Mammary epithelial cell (primary cell): ENCODE measurements at regions of chr11 and their contacts with region 1.

Region 1: DNA sequence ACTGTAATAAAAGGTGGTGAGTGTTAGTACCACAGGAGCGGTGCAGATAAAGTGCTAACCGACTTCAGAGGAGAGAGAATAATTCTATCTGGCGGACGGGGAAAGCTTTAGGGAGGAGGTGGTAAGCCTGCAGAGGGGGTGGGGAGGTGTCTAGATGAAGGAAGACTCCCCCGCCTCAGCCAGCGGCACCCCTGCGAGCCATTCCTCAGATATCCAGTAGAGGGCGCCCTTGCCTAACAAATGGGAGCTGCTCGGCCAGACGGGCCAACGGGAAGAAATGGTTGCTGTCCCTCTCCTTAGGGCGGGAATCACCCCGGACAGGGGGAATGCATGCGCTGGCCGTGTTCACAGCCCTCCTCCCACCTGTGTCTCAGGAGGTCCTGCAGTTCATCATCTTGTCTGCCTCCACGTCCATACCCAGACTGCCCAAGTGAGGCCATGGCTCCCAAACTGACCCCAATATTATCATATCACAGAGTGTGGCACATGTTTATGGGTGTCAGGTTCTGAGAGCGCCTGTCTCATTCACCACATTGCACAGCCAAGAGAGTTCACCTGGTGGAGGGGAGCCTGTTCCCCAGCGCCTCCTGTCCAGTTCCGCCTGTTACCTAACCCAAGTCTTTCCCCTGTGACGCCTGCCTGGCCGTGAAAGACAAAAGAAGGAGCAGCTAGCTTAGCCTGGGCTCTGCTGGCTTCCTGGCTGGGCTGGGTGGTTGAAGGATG is 85.5 kb downstream of the ST3GAL4 start:
- DNase-seq: peak; percentile 49
- H3K4me3 ChIP-seq: no peak overlapping the region
- H3K27ac ChIP-seq: no peak overlapping the region
- H3K4me1 ChIP-seq: no peaks in the 10 kb centered on the region
- H3K27me3 ChIP-seq: no peaks in the 10 kb centered on the region
- CTCF ChIP-seq: peak; percentile 87 to 93

Region 2: DNA sequence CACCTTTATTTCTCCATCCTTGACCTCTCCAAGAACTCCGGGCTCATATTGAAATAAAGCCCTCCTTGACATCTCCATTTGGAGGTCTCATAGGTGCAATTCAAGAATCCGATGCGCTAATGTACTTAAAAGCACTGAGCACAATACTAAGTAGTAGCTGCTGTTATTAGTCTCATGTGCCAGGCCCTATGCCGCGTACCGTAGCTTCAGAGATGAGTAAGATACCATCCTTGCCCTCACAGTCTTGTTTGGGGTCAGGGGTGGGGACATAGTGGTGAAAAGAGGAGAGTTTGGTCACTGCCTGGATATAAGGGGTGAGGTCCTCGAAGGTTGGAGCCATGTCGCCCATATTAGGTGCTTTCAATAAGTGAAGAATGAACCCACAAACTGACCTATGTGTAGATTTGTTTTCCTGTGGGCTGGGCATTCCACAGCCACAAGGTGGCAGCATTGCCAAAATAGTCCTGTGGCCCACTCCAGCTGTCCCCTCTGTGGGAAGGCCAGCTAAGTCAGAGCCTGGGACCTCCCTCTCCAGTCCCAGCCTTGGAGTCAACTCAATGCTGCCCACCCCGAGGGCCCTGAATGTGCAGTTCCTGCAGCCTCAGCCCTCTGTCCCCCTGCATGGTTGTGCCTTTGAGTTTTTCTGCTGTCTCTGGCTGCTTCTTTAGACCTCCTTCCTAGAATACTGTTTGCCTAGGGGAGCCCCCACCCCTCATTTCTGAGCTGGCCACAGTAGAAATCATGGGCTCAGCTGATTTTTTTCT is 130.5 kb before region 1 on chr11:
- CTCF ChIA-PET with region 1: no interaction called
- dilution Hi-C with region 1: no loop called
- in situ Hi-C with region 1: no loop called
- intact Hi-C with region 1: loop called (anchors 1 kb)
- DNase-seq: peak; percentile 50
- H3K4me3 ChIP-seq: no peak overlapping the region
- H3K27ac ChIP-seq: no peak overlapping the region
- H3K4me1 ChIP-seq: peaks cover 22% of the 10 kb centered on the region
- H3K27me3 ChIP-seq: no peaks in the 10 kb centered on the region
- CTCF ChIP-seq: peak; percentile 86 to 93

Region 3: GRCh38 chr11:126403658-126404057 is 37.3 kb before region 1 on chr11:
- CTCF ChIA-PET with region 1: no interaction called
- dilution Hi-C with region 1: no loop called
- in situ Hi-C with region 1: no loop called
- intact Hi-C with region 1: no loop called
- DNase-seq: no peak
- H3K4me3 ChIP-seq: no peak overlapping the region
- H3K27ac ChIP-seq: no peak overlapping the region
- H3K4me1 ChIP-seq: peaks cover 35% of the 10 kb centered on the region
- H3K27me3 ChIP-seq: no peaks in the 10 kb centered on the region
- CTCF ChIP-seq: no peak

Region 4: GRCh38 chr11:126480410-126481302 is 39.7 kb after region 1 on chr11:
- CTCF ChIA-PET with region 1: interaction called, 11 read pairs
- dilution Hi-C with region 1: no loop called
- in situ Hi-C with region 1: no loop called
- intact Hi-C with region 1: loop called (anchors 1 kb)
- DNase-seq: peak; percentile 70
- H3K4me3 ChIP-seq: no peak overlapping the region
- H3K27ac ChIP-seq: no peak overlapping the region
- H3K4me1 ChIP-seq: peaks cover 4% of the 10 kb centered on the region
- H3K27me3 ChIP-seq: no peaks in the 10 kb centered on the region
- CTCF ChIP-seq: peak; percentile 94 to 97

Region 5: DNA sequence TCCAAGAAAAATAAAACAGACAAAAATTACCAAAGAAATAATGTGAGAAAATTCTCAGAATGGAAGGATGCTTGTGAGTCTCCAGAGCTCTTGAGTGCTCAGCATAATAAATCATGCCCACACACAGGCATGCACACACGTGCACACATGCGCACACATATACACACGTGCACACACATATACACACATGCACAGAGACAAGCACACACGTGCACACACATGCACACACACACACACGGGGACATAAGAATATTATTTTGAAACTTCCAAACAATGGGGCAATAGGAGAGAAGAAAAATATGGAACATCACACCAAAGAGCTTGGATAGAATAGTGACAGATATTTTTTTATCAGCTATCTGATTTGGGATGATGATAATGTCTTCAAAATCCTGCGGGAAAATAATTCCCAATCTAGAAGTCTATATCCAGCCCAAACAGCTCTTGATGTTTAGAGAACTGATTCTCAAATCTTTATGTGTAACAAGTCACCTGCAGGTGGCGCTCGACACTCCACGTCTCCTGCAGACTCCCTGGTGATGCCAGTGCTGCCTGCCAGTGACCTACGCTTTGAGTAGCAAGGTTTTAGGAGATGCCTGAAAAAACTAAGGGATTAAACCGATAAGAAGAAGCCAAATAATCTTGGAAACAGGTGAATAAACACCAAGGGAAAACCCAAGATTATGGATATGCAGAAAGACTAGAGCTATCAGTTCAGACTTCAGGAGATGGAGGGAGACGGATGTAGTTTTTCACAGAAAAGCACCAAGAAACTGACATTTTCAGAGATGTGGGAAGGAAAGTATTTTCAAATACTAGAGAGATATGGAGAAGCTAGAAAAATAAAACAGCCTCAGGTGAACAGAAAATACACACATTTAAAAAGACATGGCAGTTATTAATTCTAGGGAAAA is 1402.8 kb after region 1 on chr11:
- CTCF ChIA-PET with region 1: no interaction called
- dilution Hi-C with region 1: no loop called
- in situ Hi-C with region 1: no loop called
- intact Hi-C with region 1: loop called (anchors 5 kb)
- DNase-seq: peak; percentile 64
- H3K4me3 ChIP-seq: no peak overlapping the region
- H3K27ac ChIP-seq: no peak overlapping the region
- H3K4me1 ChIP-seq: peaks cover 12% of the 10 kb centered on the region
- H3K27me3 ChIP-seq: no peaks in the 10 kb centered on the region
- CTCF ChIP-seq: peak; percentile 80 to 82

Region 6: DNA sequence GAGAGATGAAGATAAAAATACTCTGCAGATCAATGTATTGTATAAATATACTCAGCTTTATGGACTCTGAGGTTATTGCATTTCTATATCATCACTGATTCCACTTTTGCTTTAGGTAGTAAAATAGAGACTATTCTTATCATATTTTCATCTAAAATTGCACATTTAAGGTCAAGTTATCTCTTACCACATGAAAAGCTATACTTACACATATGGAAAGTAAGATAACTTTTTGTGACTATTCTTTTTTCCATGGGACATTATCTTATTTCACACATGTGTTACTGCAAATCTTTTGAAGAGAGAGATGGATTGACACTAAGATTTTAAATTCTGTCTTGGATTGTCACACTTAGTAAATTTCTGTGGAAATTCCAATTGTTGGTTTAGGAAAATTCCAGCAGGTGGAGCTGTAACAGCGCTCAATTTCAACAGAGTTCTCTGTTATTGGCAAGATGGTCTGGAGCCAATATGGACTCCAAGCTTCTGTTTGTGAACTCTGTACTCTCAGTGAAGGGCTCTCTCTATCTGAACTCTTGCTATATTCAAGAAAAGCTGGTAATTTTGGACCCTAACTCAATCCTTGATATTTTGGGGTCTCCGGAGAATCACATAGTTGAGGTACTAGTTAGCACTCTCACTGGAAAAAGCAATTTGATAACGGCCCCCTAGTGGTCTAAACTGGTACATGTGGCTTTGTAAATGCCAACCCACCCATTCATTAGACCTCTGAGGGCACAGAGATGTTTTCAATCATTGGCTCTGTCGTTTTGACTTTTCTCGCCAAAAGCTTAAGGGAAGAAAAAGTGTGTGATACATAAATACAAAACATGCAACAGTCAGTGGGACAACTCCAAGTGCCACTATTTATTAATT is 1716.7 kb after region 1 on chr11:
- CTCF ChIA-PET with region 1: no interaction called
- dilution Hi-C with region 1: no loop called
- in situ Hi-C with region 1: no loop called
- intact Hi-C with region 1: loop called (anchors 2 kb)
- DNase-seq: peak; percentile 67
- H3K4me3 ChIP-seq: peak overlapping the region in 2 of 3 experiments; percentile 13 to 26
- H3K27ac ChIP-seq: peak overlapping the region; percentile 11
- H3K4me1 ChIP-seq: no peaks in the 10 kb centered on the region
- H3K27me3 ChIP-seq: no peaks in the 10 kb centered on the region
- CTCF ChIP-seq: peak; percentile 73 to 76